GM12878 (cell line): ENCODE measurements at regions of chr5 and their contacts with region 1.

Region 1: DNA sequence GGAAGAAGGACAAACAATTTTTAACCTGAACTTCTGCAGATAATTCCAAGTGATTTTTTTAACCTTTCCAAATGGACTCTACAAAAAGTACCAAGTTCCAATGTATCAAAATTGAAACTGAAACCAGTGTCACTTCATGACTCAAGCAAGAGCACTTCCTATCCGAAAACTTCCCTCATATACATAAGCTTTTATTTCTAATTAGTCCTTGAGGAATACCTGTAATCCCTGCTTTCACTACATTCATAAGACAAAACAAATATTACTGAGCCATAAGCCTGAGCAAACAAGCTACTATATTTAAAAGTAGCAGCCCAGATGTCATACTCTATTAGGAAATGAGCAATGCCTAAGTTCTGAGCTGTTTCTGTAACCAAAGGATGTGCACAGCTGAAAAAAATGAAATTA is 224.4 kb downstream of the EBF1 start:
- DNase-seq: no peak
- ATAC-seq: peak; percentile 54
- H3K4me3 ChIP-seq: no peak overlapping the region
- H3K27ac ChIP-seq: peak overlapping the region; percentile 71
- H3K4me1 ChIP-seq: peaks cover 55% of the 10 kb centered on the region
- H3K27me3 ChIP-seq: no peaks in the 10 kb centered on the region
- CTCF ChIP-seq: no peak
- EP300 ChIP-seq: peak; percentile 60 to 64; a peak in 2 of 4 replicates
- POLR2A ChIP-seq: no peak
- RAD21 ChIP-seq: no peak

Region 2: DNA sequence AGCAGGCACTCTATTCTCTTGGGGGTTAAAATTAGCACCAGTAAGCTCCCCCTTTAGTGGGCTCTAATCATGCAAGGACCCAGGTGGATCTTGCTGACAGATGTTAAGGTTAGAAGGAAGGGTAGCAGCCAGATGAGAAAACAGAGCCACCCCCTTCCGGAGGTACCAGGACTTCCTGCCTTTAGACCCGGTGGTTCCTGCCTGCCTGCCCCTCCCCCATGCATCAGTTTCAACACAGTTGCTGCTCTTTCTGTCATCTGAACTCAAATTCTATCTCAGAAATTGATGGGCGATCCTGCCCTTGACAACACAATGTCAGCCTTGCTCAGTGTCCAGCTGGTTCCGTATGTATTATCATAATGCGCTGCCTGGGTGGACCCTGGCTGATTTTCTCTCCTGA is 62.9 kb before region 1 on chr5:
- CTCF ChIA-PET with region 1: interaction called, 7 read pairs
- POLR2A ChIA-PET with region 1: interaction called, 20 read pairs
- RAD21 ChIA-PET with region 1: interaction called, 77 read pairs
- SMC1A ChIA-PET with region 1: interaction called, 65 read pairs
- in situ Hi-C with region 1: no loop called
- intact Hi-C with region 1: no loop called
- DNase-seq: peak; percentile 51
- ATAC-seq: peak; percentile 82
- H3K4me3 ChIP-seq: no peak overlapping the region
- H3K27ac ChIP-seq: peak overlapping the region; percentile 17; the same call in 1 of the 2 replicates
- H3K4me1 ChIP-seq: peaks cover 16% of the 10 kb centered on the region; the same call in 1 of the 2 replicates
- H3K27me3 ChIP-seq: no peaks in the 10 kb centered on the region
- CTCF ChIP-seq: no peak
- EP300 ChIP-seq: no peak
- POLR2A ChIP-seq: no peak
- RAD21 ChIP-seq: 0 out of 2 replicates have a peak, but pooled peaks have one; percentile 3

Region 3: GRCh38 chr5:158848634-158849033 is 26.6 kb before region 1 on chr5:
- CTCF ChIA-PET with region 1: interaction called, 12 read pairs
- POLR2A ChIA-PET with region 1: interaction called, 16 read pairs
- RAD21 ChIA-PET with region 1: interaction called, 30 read pairs
- SMC1A ChIA-PET with region 1: interaction called, 149 read pairs
- in situ Hi-C with region 1: no loop called
- intact Hi-C with region 1: loop called (anchors 2 kb)
- DNase-seq: peak; percentile 80
- ATAC-seq: peak; percentile 79
- H3K4me3 ChIP-seq: no peak overlapping the region
- H3K27ac ChIP-seq: peak overlapping the region; percentile 68
- H3K4me1 ChIP-seq: peaks cover 31% of the 10 kb centered on the region
- H3K27me3 ChIP-seq: no peaks in the 10 kb centered on the region
- CTCF ChIP-seq: no peak
- EP300 ChIP-seq: peak; percentile 16 to 30; a peak in 1 of 4 replicates
- POLR2A ChIP-seq: no peak
- RAD21 ChIP-seq: no peak

Region 4: DNA sequence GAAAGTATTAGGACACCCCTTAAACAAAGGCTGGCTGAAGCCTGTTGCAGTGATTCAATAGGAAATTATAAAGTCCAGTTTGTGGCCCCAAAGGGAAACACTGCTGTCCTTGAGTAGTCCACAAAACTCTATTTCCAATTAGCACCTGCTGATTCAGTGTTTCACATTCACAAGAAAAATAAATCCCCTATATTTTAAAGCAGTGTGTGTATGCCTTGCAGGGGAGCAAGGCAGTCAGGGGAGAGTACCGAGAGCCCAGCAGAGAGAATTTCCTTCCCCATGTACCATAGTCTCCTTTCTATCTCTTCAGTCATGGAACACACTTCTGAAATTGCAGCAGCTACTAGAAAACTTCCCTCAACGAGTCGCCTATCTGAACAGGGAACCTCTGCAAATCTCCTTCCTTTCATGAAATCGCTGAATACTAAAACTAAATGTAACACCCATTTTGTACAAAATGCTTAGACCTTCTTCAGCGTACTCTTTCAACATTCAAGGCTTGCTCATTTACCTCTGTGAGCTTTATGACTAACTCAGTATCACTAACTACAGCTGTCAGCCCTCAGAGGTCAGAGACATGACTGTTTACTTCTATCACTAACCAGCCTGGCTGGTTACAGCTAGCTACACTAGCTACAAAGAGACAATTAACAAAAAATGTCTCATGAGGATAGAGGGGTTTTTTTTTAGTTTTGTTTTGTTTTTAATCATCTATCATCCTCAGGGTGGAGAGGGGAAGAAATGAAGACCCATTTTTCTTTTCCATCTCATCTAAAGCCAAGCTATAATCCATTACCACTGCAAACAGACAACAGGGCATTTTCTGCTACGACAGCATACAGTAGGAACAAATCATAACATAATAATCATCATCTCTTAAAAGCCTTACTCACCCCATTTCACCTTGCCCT is 35.8 kb after region 1 on chr5:
- CTCF ChIA-PET with region 1: interaction called, 3 read pairs
- POLR2A ChIA-PET with region 1: interaction called, 12 read pairs
- RAD21 ChIA-PET with region 1: interaction called, 7 read pairs
- SMC1A ChIA-PET with region 1: interaction called, 131 read pairs
- in situ Hi-C with region 1: no loop called
- intact Hi-C with region 1: no loop called
- DNase-seq: no peak
- ATAC-seq: peak; percentile 88
- H3K4me3 ChIP-seq: no peak overlapping the region
- H3K27ac ChIP-seq: peak overlapping the region; percentile 50
- H3K4me1 ChIP-seq: peaks cover 32% of the 10 kb centered on the region
- H3K27me3 ChIP-seq: no peaks in the 10 kb centered on the region
- CTCF ChIP-seq: no peak
- EP300 ChIP-seq: peak; percentile 29 to 85; a peak in 2 of 4 replicates
- POLR2A ChIP-seq: no peak
- RAD21 ChIP-seq: no peak

Region 5: DNA sequence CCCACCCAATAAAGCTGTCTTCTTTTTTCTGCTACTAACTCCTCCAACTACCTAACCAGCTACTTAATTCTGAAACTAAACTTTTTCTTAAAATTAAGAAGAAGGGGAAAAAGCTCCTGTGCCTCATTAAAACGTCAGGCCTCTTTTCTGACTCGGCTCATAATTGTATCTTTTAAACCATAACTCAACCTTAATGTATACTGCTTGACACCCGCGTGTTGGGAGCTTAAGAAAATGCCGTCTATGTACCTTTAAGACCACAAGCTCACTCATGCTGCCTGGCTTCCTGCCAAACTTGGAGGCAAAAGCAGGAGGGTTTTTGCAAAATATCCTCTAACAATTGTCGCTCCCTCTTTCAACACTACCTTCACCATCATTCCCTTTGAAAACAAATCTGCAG is 219.5 kb after region 1 on chr5:
- CTCF ChIA-PET with region 1: interaction called, 6 read pairs
- POLR2A ChIA-PET with region 1: interaction called, 18 read pairs
- RAD21 ChIA-PET with region 1: interaction called, 22 read pairs
- SMC1A ChIA-PET with region 1: interaction called, 28 read pairs
- in situ Hi-C with region 1: no loop called
- intact Hi-C with region 1: no loop called
- DNase-seq: no peak
- ATAC-seq: peak; percentile 35
- H3K4me3 ChIP-seq: peak overlapping the region; percentile 88
- H3K27ac ChIP-seq: peak overlapping the region; percentile 68
- H3K4me1 ChIP-seq: peaks cover 5% of the 10 kb centered on the region; the same call in 1 of the 2 replicates
- H3K27me3 ChIP-seq: no peaks in the 10 kb centered on the region
- CTCF ChIP-seq: no peak
- EP300 ChIP-seq: no peak
- POLR2A ChIP-seq: no peak
- RAD21 ChIP-seq: no peak